ENCODE measurements at regions of chr3 and their contacts with region 1.

Region 1: GRCh38 chr3:126389112-126389793 is 5.5 kb upstream of the CFAP100 start:
- DNase-seq: peak; percentile 98
- ATAC-seq: peak; percentile 91 to 96
- H3K4me3 ChIP-seq: peak overlapping the region; percentile 33 to 52 (median 45)
- H3K27ac ChIP-seq: peak overlapping the region; percentile 90 to 97 (median 90)
- H3K4me1 ChIP-seq: peaks cover 9 to 14% of the 10 kb centered on the region in 2 donors
- H3K27me3 ChIP-seq: peaks cover 0 to 2% (median 0%) of the 10 kb centered on the region in 3 donors
- CTCF ChIP-seq: peak; percentile 88 to 100 (median 99)
- POLR2A ChIP-seq: peak; percentile 88 to 95

Region 2: GRCh38 chr3:126146525-126147146 is 242.6 kb before region 1 on chr3:
- in situ Hi-C with region 1: loop called in 3 of 4 experiments (anchors 10 to 25 kb)
- intact Hi-C with region 1: no loop called
- DNase-seq: no peak
- ATAC-seq: no peak
- H3K4me3 ChIP-seq: no peak overlapping the region
- H3K27ac ChIP-seq: no peak overlapping the region
- H3K4me1 ChIP-seq: no peaks in the 10 kb centered on the region
- H3K27me3 ChIP-seq: no peaks in the 10 kb centered on the region
- CTCF ChIP-seq: no peak
- POLR2A ChIP-seq: no peak

Region 3: DNA sequence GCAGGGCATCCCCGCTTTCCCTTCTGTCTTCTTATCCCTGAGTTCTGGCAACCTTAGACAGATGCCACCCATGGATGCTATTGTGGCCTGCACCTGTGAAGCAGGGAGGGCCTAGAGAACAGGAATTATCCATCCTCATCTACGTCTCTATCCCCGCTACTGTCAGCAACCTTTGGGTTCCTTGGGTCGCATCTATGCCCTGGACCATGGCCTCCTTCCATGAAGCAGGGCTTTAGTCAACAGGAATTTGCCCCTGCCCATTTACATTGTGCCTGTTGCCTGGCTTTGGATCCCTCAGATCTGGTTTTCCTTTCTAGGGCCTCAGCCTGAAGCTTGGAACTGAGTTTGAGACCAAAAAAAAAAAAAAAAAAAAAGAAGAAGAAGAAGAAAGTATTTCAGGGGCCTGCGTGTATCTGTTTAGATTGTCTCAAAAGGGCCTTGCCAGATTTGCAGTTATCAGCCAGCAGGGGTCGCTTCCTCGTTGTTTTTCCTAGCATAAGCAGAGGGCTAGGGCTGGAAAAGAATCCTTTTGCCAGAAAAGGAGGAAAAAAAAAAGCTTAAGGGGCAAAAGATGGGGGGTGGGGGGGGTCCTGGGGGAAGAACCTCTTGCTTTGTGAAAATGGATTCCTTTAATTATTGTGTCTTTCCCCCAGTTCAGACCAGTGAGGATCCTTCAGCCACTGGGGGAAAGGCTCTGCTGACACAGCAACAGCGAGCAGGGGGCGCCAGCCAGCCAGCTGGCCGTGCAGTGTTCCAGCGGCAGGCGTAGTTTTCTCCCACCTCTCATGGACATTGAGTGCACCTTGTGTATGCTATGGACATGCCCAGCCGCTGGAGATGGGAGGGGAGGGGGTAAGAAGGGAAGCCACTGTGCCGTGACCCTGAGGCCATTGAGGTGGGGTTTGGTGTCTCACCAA is 143.2 kb before region 1 on chr3:
- in situ Hi-C with region 1: loop called (anchors 5 to 10 kb)
- intact Hi-C with region 1: loop called (anchors 1 kb)
- DNase-seq: peak; percentile 53 to 69
- ATAC-seq: peak; percentile 93 to 95
- H3K4me3 ChIP-seq: no peak overlapping the region
- H3K27ac ChIP-seq: peak overlapping the region in 3 of 4 donors; percentile 4 to 46 (median 19)
- H3K4me1 ChIP-seq: peaks cover 0 to 4% of the 10 kb centered on the region in 2 donors
- H3K27me3 ChIP-seq: no peaks in the 10 kb centered on the region
- CTCF ChIP-seq: peak in 4 of 5 experiments; percentile 41 to 63 (median 53)
- POLR2A ChIP-seq: no peak

Region 4: DNA sequence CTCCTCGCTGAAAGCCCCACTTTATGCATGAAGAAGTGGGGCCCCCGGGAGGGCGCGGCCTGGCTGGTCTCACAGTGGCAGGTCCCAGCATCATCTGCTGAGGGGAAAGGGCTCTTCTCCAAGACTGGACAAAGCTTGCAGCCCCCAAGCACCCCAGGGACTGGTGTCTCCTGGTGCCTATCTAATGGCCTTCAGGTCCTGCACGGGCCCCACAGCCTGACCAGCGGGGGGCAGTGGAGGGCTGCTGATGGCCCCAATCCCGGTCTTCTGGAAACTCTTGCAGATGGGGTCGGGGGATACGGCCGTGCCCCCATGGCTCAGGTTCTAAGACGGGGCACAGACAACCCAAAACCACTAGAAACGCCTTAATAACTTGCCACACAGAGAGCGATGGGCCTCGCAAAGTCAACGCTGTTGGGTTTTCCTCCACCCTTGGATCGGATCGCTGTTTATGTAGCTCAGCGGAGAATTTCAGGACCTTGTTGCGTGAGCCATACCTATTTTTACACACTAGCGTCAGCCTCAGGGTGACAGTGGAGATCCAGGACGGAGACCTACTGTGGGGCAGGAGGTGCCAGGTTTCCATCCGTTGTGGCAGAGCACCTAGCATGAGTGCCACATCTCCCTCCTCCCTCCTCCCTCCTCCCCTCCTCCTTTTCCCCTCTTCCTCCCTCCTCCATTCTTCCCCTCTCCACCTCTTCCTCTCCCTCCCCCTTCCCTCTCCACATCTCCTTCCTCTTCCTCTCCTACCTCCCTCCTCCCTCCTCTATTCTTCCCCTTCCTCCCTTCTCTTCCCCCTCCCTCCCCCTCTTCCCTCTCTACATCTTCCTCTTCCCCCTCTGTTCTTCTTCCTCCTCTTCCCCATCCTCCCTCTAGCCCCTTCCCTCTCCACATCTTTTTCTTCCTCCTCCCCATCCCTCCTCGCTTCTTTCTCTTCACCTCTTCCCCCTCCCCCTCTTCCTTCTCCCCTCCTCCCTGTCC is 129.6 kb before region 1 on chr3:
- in situ Hi-C with region 1: loop called in 1 of 4 experiments (anchors 5 kb)
- intact Hi-C with region 1: loop called (anchors 1 kb)
- DNase-seq: peak; percentile 88 to 93
- ATAC-seq: peak; percentile 94 to 95
- H3K4me3 ChIP-seq: peak overlapping the region; percentile 26 to 44 (median 36)
- H3K27ac ChIP-seq: peak overlapping the region; percentile 80 to 92 (median 89)
- H3K4me1 ChIP-seq: peaks cover 25 to 30% of the 10 kb centered on the region in 2 donors
- H3K27me3 ChIP-seq: no peaks in the 10 kb centered on the region
- CTCF ChIP-seq: peak; percentile 81 to 97 (median 94)
- POLR2A ChIP-seq: peak; percentile 51 to 63

Region 5: GRCh38 chr3:126370606-126371005 is 18.6 kb before region 1 on chr3:
- in situ Hi-C with region 1: no loop called
- intact Hi-C with region 1: loop called (anchors 1 kb)
- DNase-seq: peak in 1 of 2 donors; percentile 9
- ATAC-seq: no peak
- H3K4me3 ChIP-seq: no peak overlapping the region
- H3K27ac ChIP-seq: peak overlapping the region; percentile 83 to 88 (median 84)
- H3K4me1 ChIP-seq: peaks cover 40 to 41% of the 10 kb centered on the region in 2 donors
- H3K27me3 ChIP-seq: no peaks in the 10 kb centered on the region
- CTCF ChIP-seq: no peak
- POLR2A ChIP-seq: no peak

Region 6: GRCh38 chr3:126475413-126476114 is 86.3 kb after region 1 on chr3 and contains the start of gene ZXDC:
- in situ Hi-C with region 1: loop called in 2 of 4 experiments (anchors 10 kb)
- intact Hi-C with region 1: loop called (anchors 2 kb)
- DNase-seq: peak; percentile 88 to 94
- ATAC-seq: peak; percentile 64 to 67
- H3K4me3 ChIP-seq: peak within 1 kb of the TSS; percentile 70 to 93 (median 72)
- H3K27ac ChIP-seq: peak within 1 kb of the TSS; percentile 95 to 97 (median 96)
- H3K4me1 ChIP-seq: peaks cover 41 to 46% of the 10 kb centered on the region in 2 donors
- H3K27me3 ChIP-seq: no peaks in the 10 kb centered on the region
- CTCF ChIP-seq: peak; percentile 18 to 68 (median 67)
- POLR2A ChIP-seq: peak; percentile 93 to 95
- total RNA-seq, gene ZXDC: 40.9 to 54.2 (median 45.4) TPM

Measured in gastrocnemius medialis (tissue), 4 donors.